Activated CD8-positive, alpha-beta memory T cell treated with anti-CD3 and anti-CD28 coated beads, Interleukin-2, amount 10 ng/mL, durations not matched to agents 7 days and 5 days (primary cell): ENCODE measurements at regions of chr10 and their contacts with region 1.

Region 1: DNA sequence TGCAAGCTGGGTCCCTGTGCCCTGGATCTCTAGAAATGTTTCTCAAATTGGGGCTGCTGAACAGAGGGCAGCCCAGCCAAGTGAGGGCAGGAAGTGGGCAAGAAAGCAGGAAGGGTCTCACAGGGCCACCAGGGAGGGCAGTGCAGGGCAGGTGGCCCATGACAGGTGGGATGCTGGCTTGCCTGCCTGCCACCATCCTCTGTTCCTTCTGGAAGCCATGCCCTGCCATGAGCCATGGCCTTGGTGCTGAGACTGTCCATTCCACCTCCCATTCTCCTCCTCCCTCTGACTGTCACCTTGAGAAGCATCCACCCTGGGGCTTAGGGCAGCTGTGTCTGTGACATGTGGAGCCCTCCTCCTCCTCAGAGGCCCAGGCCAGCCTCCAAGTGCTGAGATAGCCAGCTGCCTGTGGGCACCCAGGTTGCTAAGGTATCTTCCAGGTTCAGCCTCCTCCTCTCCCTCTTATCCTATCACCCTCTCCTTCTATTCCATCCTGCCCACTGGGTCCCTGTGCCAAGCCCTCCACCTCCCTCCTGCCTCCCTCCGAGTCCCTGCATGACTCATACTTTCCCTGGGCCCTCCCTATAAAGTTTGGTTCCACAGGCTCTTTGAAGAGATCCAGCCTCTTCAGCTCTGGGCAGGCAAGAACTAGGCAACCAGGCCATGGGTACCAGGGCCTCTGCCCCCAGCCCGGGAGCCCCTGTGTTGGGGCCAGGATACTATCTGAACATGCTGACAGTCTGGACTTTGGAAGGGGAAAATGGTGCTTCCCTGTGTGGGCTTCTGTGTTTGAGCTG is 1.3 kb downstream of the VSIR start:
- DNase-seq: no peak
- ATAC-seq: no peak
- H3K4me3 Mint-ChIP-seq: peak overlapping the region; percentile 84
- H3K27ac Mint-ChIP-seq: peak overlapping the region; percentile 90
- H3K4me1 Mint-ChIP-seq: peaks cover 83% of the 10 kb centered on the region
- H3K27me3 Mint-ChIP-seq: no peaks in the 10 kb centered on the region

Region 2: GRCh38 chr10:70985824-70986622 is 786.0 kb before region 1 on chr10:
- CTCF ChIA-PET with region 1: no interaction called
- DNase-seq: peak; percentile 82
- ATAC-seq: peak; percentile 75
- H3K4me3 Mint-ChIP-seq: no peak overlapping the region
- H3K27ac Mint-ChIP-seq: peak overlapping the region; percentile 65
- H3K4me1 Mint-ChIP-seq: peaks cover 42% of the 10 kb centered on the region
- H3K27me3 Mint-ChIP-seq: no peaks in the 10 kb centered on the region

Region 3: GRCh38 chr10:71713135-71714030 is 58.6 kb before region 1 on chr10:
- CTCF ChIA-PET with region 1: interaction called, 61 read pairs
- DNase-seq: peak; percentile 63
- ATAC-seq: peak; percentile 79
- H3K4me3 Mint-ChIP-seq: peak overlapping the region; percentile 60
- H3K27ac Mint-ChIP-seq: peak overlapping the region; percentile 98
- H3K4me1 Mint-ChIP-seq: peaks cover 36% of the 10 kb centered on the region
- H3K27me3 Mint-ChIP-seq: no peaks in the 10 kb centered on the region

Region 4: GRCh38 chr10:71740069-71740468 is 31.9 kb before region 1 on chr10:
- CTCF ChIA-PET with region 1: interaction called, 35 read pairs
- DNase-seq: no peak
- ATAC-seq: no peak
- H3K4me3 Mint-ChIP-seq: no peak overlapping the region
- H3K27ac Mint-ChIP-seq: peak overlapping the region; percentile 4
- H3K4me1 Mint-ChIP-seq: peaks cover 79% of the 10 kb centered on the region
- H3K27me3 Mint-ChIP-seq: no peaks in the 10 kb centered on the region

Region 5: GRCh38 chr10:71756311-71757191 is 15.5 kb before region 1 on chr10:
- CTCF ChIA-PET with region 1: interaction called, 26 read pairs
- DNase-seq: no peak
- ATAC-seq: peak; percentile 52
- H3K4me3 Mint-ChIP-seq: peak overlapping the region; percentile 55
- H3K27ac Mint-ChIP-seq: peak overlapping the region; percentile 88
- H3K4me1 Mint-ChIP-seq: peaks cover 69% of the 10 kb centered on the region
- H3K27me3 Mint-ChIP-seq: no peaks in the 10 kb centered on the region

Region 6: DNA sequence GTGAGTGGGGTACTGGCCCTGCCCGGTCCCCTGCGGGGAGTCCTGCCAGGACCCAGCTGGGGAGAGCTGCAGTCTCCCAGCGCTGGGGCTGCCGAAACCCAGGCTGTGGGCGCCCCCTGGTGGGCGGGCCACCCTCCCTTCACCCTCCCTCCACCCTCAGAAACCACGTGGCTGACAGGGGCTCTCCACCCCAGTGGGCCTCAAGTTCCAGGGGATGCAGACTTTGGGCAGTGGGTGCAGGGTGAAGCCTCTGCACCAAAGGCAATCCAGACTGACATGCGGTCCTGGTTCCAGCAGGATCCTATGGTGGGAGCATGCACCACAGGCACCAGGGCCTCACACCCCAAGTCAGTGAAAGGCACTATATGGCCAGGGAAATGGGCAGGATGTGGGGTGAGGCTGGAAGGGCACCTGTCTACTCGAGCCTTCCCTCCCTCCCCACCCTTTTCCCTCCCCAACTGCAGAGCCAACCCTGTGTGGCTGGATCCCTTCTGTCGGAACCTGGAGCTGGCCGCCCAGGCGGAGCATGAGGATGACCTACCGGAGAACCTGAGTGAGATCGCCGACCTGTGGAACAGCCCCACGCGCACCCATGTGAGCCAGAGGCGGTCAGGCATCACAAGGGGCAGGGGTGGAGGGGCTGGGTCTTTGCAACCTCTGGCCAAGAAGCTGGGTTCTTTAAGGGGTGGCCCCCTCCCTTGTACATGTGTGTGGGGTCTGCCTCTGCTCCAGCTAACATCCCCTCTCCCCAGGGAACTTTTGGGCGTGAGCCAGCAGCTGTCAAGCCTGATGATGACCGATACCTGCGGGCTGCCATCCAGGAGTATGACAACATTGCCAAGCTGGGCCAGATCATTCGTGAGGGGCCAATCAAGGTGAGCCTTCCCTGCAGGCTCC is 40.2 kb after region 1 on chr10:
- CTCF ChIA-PET with region 1: interaction called, 47 read pairs
- DNase-seq: peak; percentile 82
- ATAC-seq: peak; percentile 96
- H3K4me3 Mint-ChIP-seq: no peak overlapping the region
- H3K27ac Mint-ChIP-seq: no peak overlapping the region
- H3K4me1 Mint-ChIP-seq: peaks cover 5% of the 10 kb centered on the region
- H3K27me3 Mint-ChIP-seq: no peaks in the 10 kb centered on the region

Region 7: GRCh38 chr10:71945819-71946474 is 173.9 kb after region 1 on chr10:
- CTCF ChIA-PET with region 1: no interaction called
- DNase-seq: no peak
- ATAC-seq: no peak
- H3K4me3 Mint-ChIP-seq: no peak overlapping the region
- H3K27ac Mint-ChIP-seq: no peak overlapping the region
- H3K4me1 Mint-ChIP-seq: no peaks in the 10 kb centered on the region
- H3K27me3 Mint-ChIP-seq: peaks cover 16% of the 10 kb centered on the region